Posterior vena cava (tissue), 2 donors: ENCODE measurements at regions of chr12 and their contacts with region 1.

Region 1: DNA sequence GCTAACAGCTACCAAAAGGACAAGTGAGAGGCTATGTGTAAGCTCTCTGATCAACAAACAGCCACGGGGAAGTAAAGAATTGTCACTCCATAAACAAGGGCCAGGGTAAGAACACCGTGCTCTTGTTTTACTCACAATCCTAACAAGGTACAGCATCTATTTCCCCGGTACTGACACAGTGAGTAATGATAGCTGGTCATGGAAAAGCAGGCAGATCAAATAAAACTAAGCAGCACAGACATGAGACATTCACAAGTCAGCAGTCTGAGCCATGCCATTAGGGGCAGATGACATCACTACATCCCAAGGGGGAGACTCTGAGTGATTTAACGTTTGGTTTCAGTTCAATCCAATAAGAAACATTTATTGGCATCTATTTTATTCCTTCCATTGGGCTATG is 54.4 kb downstream of the ARL6IP4 start:
- DNase-seq: peak; percentile 17

Region 2: DNA sequence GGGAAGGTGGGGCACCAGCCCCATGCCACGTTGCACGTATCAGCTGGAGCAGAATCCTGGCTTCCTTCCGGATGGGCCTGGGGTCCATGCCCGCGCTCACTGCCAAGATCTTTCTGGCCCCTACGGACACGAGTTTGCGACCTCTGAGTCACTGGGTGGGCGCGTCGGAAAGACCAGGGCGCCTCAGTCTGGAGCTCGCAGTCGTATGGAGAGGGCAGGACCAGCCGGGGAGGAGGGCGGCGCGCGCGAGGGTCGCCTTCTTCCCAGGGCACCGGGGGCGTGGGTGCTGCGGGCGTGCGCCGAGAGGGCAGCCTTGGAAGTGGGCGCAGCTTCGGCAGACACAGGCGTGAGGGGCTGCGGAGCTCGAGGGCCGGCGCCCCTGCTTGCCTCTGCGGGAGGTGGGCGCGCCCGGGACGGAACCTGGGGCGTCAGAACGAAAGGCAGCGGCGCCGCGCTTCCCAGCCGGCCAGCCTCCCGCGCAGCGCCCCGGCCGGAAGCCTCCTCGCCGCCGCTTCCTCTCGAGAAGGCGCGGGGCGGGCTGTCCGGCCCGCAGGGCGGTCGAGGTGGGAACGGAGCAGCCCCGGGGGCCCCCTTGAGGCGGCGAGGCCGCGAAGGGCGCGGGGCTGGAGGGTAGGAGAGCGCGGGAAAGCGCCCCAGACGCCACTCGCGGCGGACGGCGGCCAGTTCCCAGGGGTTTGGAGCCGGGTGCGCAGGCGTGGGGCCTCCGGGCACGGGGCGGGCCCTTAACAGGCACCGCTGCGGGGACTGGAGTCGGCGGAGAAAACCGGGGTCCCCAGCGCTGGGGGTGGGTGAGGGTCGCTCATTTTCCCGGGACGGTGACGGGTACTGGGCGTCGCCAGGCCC is 54.5 kb before region 1 on chr12 and contains the start of gene ARL6IP4:
- intact Hi-C with region 1: loop called in 1 of 2 experiments (anchors 5 kb)
- DNase-seq: peak; percentile 90
- total RNA-seq, gene ARL6IP4: 125 to 132 TPM

Region 3: GRCh38 chr12:123062681-123063486 is 28.0 kb after region 1 on chr12:
- intact Hi-C with region 1: no loop called
- DNase-seq: no peak

Region 4: DNA sequence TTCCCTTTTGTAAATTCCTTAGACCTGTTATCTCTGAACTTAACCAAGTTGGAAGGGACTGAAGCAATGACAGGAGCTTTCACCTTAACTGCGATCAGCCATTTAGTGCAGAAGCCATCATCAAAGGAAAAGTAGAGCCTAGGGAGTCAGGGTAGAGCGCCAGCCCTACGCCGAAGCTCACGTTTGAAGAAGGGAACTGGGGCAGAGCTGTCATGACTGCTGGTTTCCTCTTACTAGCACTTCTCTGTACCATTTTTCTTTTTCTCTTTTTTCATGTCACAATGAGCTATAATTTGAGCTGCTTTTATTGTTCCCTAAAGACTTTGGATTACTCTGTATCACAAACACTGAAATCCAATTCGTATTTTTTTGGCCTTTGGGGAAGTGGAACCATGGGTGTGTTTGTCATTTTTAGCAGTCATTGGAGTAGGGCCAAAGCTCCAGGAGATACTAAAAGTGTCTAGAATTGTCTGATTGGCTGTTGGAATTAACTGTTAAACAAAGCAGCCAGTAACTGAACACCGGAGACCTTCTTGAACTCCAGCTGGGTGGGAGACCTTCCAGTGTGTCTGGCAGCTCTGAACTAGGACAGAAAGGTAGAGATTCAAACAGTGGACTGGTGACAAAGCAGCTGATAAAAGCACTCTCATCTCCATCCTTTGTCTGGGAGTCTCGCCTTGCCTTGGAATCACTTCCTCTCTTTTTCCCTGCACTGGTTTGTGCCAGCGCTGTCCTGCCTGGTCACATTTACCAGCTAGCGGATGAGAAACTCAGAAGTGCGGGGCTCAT is 207.4 kb after region 1 on chr12:
- intact Hi-C with region 1: loop called in 1 of 2 experiments (anchors 5 kb)
- DNase-seq: peak; percentile 20